ENCODE measurements at regions of chr10 and their contacts with region 1.

Region 1: GRCh38 chr10:69408318-69409175 is 8.2 kb downstream of the TACR2 start:
- DNase-seq: peak; percentile 81
- H3K4me3 Mint-ChIP-seq: peak overlapping the region; percentile 79
- H3K27ac Mint-ChIP-seq: peak overlapping the region; percentile 82
- H3K4me1 Mint-ChIP-seq: peaks cover 24% of the 10 kb centered on the region
- H3K27me3 Mint-ChIP-seq: no peaks in the 10 kb centered on the region

Region 2: DNA sequence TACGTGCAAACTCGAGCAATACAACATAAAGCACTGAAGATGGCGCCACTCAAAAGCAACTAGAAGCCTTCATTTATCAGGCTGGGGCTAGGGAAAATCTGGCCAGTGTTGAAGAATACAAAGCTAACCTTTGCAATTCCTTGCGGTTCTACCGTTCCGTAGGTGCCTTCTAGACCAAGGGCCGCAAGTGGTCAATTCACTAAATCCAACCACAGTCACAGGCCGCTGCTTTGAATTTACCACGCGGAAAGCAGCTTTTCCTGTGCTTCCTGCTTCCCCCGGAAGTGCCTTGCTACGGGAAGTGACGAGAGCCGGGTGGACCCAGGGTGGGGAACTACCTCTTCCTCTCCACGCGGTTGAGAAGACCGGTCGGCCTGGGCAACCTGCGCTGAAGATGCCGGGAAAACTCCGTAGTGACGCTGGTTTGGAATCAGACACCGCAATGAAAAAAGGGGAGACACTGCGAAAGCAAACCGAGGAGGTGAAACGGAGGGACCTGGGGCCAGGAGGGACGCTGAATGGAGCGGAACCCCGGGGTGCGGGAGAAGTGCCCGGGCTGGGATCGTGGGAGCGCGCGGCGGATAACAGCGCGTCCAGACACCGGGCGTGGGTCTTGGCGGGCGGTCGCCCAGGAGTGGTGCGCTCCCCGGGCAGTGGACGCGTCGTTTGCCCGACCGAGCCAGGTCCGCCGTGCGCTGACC is 452.6 kb before region 1 on chr10 and contains the start of gene DDX21:
- intact Hi-C with region 1: loop called (anchors 1 kb)
- DNase-seq: peak; percentile 87
- H3K4me3 Mint-ChIP-seq: peak within 1 kb of the TSS; percentile 99
- H3K27ac Mint-ChIP-seq: peak within 1 kb of the TSS; percentile 99
- H3K4me1 Mint-ChIP-seq: peaks cover 25% of the 10 kb centered on the region
- H3K27me3 Mint-ChIP-seq: no peaks in the 10 kb centered on the region
- total RNA-seq, gene DDX21: 267 and 278 TPM in 2 replicates

Region 3: GRCh38 chr10:69004821-69005220 is 403.7 kb before region 1 on chr10:
- intact Hi-C with region 1: loop called (anchors 5 kb)
- DNase-seq: no peak
- H3K4me3 Mint-ChIP-seq: no peak overlapping the region
- H3K27ac Mint-ChIP-seq: no peak overlapping the region
- H3K4me1 Mint-ChIP-seq: peaks cover 18% of the 10 kb centered on the region
- H3K27me3 Mint-ChIP-seq: no peaks in the 10 kb centered on the region

Region 4: DNA sequence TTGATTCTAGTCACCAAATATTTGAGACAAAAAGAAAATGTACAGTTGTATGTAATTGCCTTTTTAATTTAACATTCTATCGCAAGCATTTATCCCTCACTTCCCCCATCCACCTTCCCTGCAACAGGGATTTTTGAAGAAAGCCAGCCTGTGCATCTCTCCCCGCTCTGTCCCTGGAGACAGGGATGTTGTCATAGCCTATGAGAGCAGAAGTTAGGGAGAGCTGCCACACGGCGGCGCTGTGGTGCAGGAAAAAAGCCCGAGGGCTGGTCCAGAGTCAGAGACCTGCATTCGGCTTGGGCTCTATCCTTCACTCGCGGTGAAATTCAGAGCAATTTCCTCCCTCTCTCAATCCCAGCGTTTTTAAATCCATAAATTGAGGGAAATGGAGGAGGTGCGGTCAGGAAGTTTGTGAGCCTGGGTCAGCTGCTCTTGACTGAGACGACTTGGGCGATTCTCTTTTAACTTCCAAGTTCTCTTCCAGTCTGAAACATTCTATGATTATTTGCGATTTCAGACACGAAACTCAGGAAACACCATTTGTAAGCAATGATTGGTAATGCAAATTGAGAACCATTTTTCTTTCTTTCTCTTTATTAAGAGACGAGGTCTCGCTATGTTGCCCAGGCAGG is 170.9 kb before region 1 on chr10:
- intact Hi-C with region 1: loop called (anchors 1 kb)
- DNase-seq: peak; percentile 78
- H3K4me3 Mint-ChIP-seq: no peak overlapping the region
- H3K27ac Mint-ChIP-seq: no peak overlapping the region
- H3K4me1 Mint-ChIP-seq: peaks cover 15% of the 10 kb centered on the region
- H3K27me3 Mint-ChIP-seq: peaks cover 2% of the 10 kb centered on the region

Region 5: DNA sequence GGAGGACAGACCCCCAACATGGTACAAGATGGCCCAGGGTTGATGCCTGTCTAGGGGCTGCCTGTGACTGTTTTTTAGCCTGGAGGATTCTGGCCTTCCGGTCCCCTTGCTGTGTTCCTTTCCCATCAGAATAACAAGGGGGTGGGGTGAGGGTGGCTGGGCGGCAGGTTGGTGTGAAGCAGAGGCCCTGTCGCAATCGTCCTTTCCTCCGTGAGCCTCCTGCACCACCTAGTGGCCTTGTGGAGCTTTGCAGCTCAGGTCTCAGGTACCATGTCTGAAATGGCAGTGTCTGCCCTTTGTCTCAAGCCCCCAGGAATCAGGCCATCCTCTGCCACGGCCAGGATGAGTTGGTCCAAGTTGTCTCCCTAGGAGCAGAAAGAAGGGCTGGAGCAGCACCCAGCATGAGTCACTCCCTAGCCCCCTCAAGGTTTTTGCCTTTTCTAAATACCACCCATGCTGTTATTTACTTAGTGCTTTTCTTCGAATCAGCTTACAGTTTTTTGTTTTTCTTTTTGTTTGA is 16.0 kb before region 1 on chr10:
- intact Hi-C with region 1: loop called (anchors 1 kb)
- DNase-seq: peak; percentile 74
- H3K4me3 Mint-ChIP-seq: no peak overlapping the region
- H3K27ac Mint-ChIP-seq: peak overlapping the region; percentile 63
- H3K4me1 Mint-ChIP-seq: peaks cover 39% of the 10 kb centered on the region
- H3K27me3 Mint-ChIP-seq: no peaks in the 10 kb centered on the region

Region 6: DNA sequence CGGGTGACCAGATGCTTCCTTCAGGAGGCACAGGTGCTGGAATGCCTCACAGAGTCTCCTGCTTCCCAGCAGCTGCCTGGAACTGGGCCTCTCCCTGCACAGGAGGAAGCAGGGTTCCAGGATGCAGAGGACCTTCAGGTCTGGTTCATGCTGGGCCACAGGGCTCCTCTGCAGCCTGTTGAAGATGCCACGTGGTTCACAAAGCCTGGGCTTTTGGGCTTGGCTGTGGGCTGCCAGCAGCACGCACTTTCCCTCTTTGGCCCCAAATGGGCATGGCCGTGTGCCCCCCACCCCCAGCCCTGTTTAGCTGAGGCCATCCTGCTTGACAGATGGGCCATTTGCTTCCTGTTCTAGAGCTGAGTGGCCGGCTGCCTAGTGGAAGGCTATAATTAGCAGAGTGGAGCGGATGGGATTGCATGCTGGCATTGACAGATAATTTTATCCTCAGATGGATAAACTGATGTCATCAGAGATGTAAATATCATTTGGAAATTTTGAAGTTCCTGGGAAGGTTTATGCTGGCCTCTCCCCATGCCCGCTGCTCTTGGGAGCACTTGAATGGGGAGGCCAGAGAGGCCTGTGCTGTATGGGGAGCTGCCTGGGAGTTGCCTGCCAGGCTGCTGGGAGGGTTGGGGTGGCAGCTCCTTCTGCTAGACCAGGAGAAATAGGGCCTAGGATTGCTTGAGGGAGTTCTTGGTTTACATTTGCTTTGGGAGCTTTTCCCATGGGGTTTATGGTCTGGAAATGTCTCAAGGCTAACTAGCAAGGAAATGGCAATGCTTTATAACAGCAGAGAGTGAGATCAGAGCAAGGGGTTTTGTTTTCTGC is 70.9 kb after region 1 on chr10:
- intact Hi-C with region 1: no loop called
- DNase-seq: no peak
- H3K4me3 Mint-ChIP-seq: no peak overlapping the region
- H3K27ac Mint-ChIP-seq: no peak overlapping the region
- H3K4me1 Mint-ChIP-seq: no peaks in the 10 kb centered on the region
- H3K27me3 Mint-ChIP-seq: peaks cover 7% of the 10 kb centered on the region

Region 7: GRCh38 chr10:69506834-69507721 is 98.5 kb after region 1 on chr10:
- intact Hi-C with region 1: loop called (anchors 1 kb)
- DNase-seq: no peak
- H3K4me3 Mint-ChIP-seq: peak overlapping the region; percentile 42
- H3K27ac Mint-ChIP-seq: peak overlapping the region; percentile 50
- H3K4me1 Mint-ChIP-seq: peaks cover 9% of the 10 kb centered on the region
- H3K27me3 Mint-ChIP-seq: peaks cover 21% of the 10 kb centered on the region

Region 8: DNA sequence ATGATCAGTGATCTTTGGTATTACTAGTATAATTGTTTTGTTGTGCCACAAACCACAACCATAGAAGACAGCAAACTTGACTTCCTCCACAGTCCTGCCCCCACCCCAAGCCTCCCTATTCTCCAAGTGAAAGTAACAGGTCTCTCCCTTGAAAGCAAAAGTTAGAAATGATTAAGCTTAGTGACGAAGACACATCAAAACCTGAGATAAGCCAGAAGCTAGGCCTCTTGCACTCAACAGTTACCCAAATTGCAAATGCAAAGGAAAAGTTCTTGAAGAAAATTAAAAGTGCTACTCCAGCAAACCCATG is 754.3 kb after region 1 on chr10:
- intact Hi-C with region 1: loop called (anchors 5 kb)
- DNase-seq: peak; percentile 58
- H3K4me3 Mint-ChIP-seq: peak overlapping the region; percentile 32
- H3K27ac Mint-ChIP-seq: peak overlapping the region; percentile 82
- H3K4me1 Mint-ChIP-seq: peaks cover 68% of the 10 kb centered on the region
- H3K27me3 Mint-ChIP-seq: no peaks in the 10 kb centered on the region